Psoas muscle (tissue), 8 donors: ENCODE measurements at regions of chr6 and their contacts with region 1.

Region 1: DNA sequence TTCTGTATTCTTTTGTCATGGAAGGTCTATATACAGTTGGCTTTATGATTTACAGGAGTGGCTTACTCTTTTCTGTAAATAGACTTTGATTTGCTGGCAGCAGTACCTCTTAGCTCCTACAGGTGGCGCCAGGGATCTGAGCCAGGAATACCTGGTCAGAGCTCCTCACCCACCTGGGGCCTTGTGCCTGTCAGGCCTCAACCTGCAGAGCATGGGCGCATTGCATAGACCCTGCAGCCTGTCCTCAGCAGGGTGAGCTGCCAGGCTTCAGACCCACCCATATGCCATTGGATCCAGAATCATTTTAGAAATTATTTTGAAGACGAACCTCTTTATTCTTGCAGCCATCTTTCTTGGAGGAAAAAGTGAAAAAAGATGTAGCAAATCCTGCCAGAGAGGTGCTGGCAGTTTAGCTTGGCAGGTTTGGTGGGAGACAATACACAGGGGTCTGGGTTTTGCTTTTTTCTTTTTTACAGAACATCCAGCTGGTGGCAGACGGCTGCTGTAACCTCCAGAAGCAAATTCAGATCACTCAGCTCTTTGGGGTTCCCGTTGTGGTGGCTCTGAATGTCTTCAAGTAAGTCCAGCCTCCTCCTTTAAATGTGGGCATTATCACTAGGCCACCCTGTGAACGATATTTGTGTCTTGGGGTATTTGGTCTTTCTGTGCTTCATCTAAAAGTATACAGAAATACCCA is 149.1 kb downstream of the MTHFD1L start:
- DNase-seq: peak; percentile 42 to 74
- ATAC-seq: peak; percentile 57 to 72 (median 62)
- H3K4me3 ChIP-seq: no peak overlapping the region
- H3K27ac ChIP-seq: no peak overlapping the region
- H3K4me1 ChIP-seq: peaks cover 3% of the 10 kb centered on the region
- H3K27me3 ChIP-seq: no peaks in the 10 kb centered on the region
- CTCF ChIP-seq: peak; percentile 90

Region 2: GRCh38 chr6:149729824-149730223 is 1284.7 kb before region 1 on chr6:
- intact Hi-C with region 1: no loop called
- DNase-seq: no peak
- ATAC-seq: no peak
- H3K4me3 ChIP-seq: no peak overlapping the region
- H3K27ac ChIP-seq: no peak overlapping the region
- H3K4me1 ChIP-seq: no peaks in the 10 kb centered on the region
- H3K27me3 ChIP-seq: no peaks in the 10 kb centered on the region
- CTCF ChIP-seq: no peak

Region 3: GRCh38 chr6:150822932-150823331 is 191.6 kb before region 1 on chr6:
- intact Hi-C with region 1: no loop called
- DNase-seq: no peak
- ATAC-seq: no peak
- H3K4me3 ChIP-seq: no peak overlapping the region
- H3K27ac ChIP-seq: no peak overlapping the region
- H3K4me1 ChIP-seq: no peaks in the 10 kb centered on the region
- H3K27me3 ChIP-seq: no peaks in the 10 kb centered on the region
- CTCF ChIP-seq: no peak

Region 4: GRCh38 chr6:151240036-151240685 is 225.6 kb after region 1 on chr6:
- intact Hi-C with region 1: loop called in 1 of 2 experiments (anchors 10 kb)
- DNase-seq: peak; percentile 80 to 88
- ATAC-seq: peak; percentile 67 to 85 (median 78)
- H3K4me3 ChIP-seq: peak overlapping the region; percentile 73
- H3K27ac ChIP-seq: peak overlapping the region; percentile 79
- H3K4me1 ChIP-seq: peaks cover 5% of the 10 kb centered on the region
- H3K27me3 ChIP-seq: peaks cover 0 to 42% (median 6%) of the 10 kb centered on the region in 3 donors
- CTCF ChIP-seq: no peak

Region 5: DNA sequence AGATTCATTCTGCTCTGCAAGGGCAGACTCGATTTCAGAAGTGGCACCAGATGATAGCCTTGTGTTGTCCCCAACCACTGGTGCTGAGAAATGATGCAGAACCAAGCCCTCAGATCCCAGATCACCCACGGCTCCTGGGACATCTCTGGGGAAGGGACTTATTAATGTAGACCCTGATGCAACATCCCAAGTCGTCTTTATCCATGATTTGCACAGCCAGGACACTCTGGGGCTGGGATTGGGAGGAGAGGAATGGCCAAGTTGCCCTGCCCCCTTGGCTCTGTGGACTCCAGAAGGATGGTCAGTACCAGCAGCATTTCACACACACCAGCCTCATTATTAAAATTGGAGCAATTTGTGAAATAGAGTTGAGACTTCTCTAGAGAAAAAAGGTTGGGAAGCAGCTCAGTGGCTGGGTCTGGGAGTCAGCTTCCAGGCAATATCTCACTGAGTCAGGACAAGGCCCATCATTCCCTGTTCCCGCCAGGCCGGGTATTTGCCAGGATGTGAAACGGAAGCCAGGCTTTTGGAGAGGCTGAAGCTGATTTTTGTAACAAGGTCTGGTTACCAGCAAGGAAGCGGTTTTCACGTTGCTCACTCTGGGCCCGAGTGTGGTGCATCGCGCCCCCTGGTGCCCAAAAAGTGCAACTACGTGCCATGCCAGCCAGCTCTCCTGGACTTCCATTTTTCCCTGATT is 309.4 kb after region 1 on chr6:
- intact Hi-C with region 1: loop called (anchors 2 kb)
- DNase-seq: peak; percentile 84 to 90
- ATAC-seq: peak; percentile 84 to 93 (median 88)
- H3K4me3 ChIP-seq: peak overlapping the region; percentile 15
- H3K27ac ChIP-seq: peak overlapping the region; percentile 38
- H3K4me1 ChIP-seq: peaks cover 12% of the 10 kb centered on the region
- H3K27me3 ChIP-seq: peaks cover 0 to 28% (median 0%) of the 10 kb centered on the region in 3 donors
- CTCF ChIP-seq: peak; percentile 97